ENCODE measurements at regions of chr4 and their contacts with region 1.

Region 1: DNA sequence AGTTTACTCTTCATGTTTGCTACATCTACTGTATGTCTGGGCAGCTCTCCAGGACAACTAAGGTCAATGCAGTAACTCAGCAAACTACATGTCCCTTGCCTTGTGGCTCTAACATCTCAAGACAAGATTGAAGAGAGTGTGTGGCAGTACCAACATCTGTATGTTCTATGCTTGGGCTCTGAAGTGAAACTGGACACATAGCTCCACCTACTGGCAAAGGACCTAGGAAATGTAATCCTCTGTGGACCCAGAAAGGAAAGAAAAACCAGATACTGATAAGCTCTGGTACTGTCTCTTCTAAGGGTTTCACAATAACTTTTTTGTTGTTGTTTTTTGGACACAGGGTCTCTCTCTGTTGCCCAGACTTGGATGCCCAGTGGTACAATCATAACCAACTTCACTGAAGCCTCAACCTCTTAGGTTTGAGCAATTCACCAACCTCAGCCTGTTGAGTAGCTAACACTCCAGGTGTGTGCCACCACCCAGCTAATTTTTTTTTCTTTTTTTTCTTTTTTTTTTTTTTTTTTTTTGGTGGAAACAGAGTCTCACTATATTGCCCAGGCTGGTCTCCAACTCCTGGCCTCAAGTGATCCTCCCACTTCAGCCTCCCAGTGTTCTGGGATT is 64.1 kb downstream of the QDPR start:
- DNase-seq: peak in 8 of 9 donors; percentile 25 to 63 (median 52)
- ATAC-seq: peak; percentile 83
- H3K4me3 ChIP-seq: no peak overlapping the region
- H3K4me3 Mint-ChIP-seq: no peak overlapping the region
- H3K27ac ChIP-seq: no peak overlapping the region
- H3K27ac Mint-ChIP-seq: no peak overlapping the region
- H3K4me1 ChIP-seq: no peaks in the 10 kb centered on the region
- H3K4me1 Mint-ChIP-seq: peaks cover 0 to 5% (median 0%) of the 10 kb centered on the region in 7 donors
- H3K27me3 ChIP-seq: no peaks in the 10 kb centered on the region
- H3K27me3 Mint-ChIP-seq: peaks cover 3 to 6% (median 4%) of the 10 kb centered on the region in 5 donors

Region 2: GRCh38 chr4:16289897-16290554 is 1157.8 kb before region 1 on chr4:
- CTCF ChIA-PET with region 1: interaction called, 13 read pairs
- POLR2A ChIA-PET with region 1: no interaction called
- intact Hi-C with region 1: loop called (anchors 1 kb)
- DNase-seq: peak in 5 of 9 donors; percentile 8 to 21 (median 19)
- ATAC-seq: peak; percentile 45
- H3K4me3 ChIP-seq: no peak overlapping the region
- H3K4me3 Mint-ChIP-seq: peak overlapping the region in 7 of 10 donors; percentile 7 to 69 (median 12)
- H3K27ac ChIP-seq: no peak overlapping the region
- H3K27ac Mint-ChIP-seq: no peak overlapping the region
- H3K4me1 ChIP-seq: no peaks in the 10 kb centered on the region
- H3K4me1 Mint-ChIP-seq: peaks cover 0 to 5% (median 4%) of the 10 kb centered on the region in 7 donors
- H3K27me3 ChIP-seq: no peaks in the 10 kb centered on the region
- H3K27me3 Mint-ChIP-seq: peaks cover 5 to 37% (median 17%) of the 10 kb centered on the region in 5 donors

Region 3: DNA sequence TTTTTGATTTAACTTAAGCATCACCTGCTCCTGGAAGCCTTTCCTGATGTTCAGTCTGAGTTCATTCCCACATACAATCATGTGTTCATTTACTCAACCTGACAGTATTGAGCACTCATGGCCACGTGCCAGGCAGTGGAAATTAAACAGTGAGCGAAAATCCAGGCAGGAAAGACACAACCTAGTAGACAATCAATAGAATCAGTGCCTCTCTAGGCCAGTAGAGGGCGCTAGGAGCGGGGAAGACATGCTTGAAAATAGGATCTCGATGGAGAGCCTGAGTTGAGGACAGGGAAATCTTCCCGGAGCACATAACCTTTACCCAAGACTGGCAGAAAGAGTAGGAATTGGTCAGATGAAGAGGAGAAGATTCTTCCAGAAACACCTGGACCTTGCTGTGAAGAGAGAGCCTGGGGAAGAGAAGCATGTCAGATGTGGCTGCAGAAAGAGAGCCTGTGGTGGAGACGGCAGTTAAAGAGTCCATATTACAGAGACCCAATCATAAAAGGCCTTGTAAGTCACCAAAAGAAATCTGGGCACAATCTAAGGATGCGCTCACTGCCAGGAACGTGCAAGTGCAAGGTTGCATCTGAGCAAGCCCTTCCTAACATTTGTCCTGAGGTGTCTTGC is 652.9 kb before region 1 on chr4:
- CTCF ChIA-PET with region 1: no interaction called
- POLR2A ChIA-PET with region 1: no interaction called
- intact Hi-C with region 1: loop called in 1 of 2 experiments (anchors 1 kb)
- DNase-seq: peak in 5 of 9 donors; percentile 3 to 32 (median 16)
- ATAC-seq: no peak
- H3K4me3 ChIP-seq: no peak overlapping the region
- H3K4me3 Mint-ChIP-seq: no peak overlapping the region
- H3K27ac ChIP-seq: no peak overlapping the region
- H3K27ac Mint-ChIP-seq: no peak overlapping the region
- H3K4me1 ChIP-seq: no peaks in the 10 kb centered on the region
- H3K4me1 Mint-ChIP-seq: peaks cover 0 to 4% (median 0%) of the 10 kb centered on the region in 7 donors
- H3K27me3 ChIP-seq: no peaks in the 10 kb centered on the region
- H3K27me3 Mint-ChIP-seq: peaks cover 0 to 9% (median 5%) of the 10 kb centered on the region in 5 donors

Region 4: GRCh38 chr4:17173300-17173699 is 274.5 kb before region 1 on chr4:
- CTCF ChIA-PET with region 1: no interaction called
- POLR2A ChIA-PET with region 1: no interaction called
- intact Hi-C with region 1: loop called in 1 of 2 experiments (anchors 1 kb)
- DNase-seq: no peak
- ATAC-seq: no peak
- H3K4me3 ChIP-seq: no peak overlapping the region
- H3K4me3 Mint-ChIP-seq: no peak overlapping the region
- H3K27ac ChIP-seq: no peak overlapping the region
- H3K27ac Mint-ChIP-seq: no peak overlapping the region
- H3K4me1 ChIP-seq: no peaks in the 10 kb centered on the region
- H3K4me1 Mint-ChIP-seq: peaks cover 0 to 2% (median 0%) of the 10 kb centered on the region in 7 donors
- H3K27me3 ChIP-seq: no peaks in the 10 kb centered on the region
- H3K27me3 Mint-ChIP-seq: peaks cover 0 to 14% (median 12%) of the 10 kb centered on the region in 5 donors

Region 5: DNA sequence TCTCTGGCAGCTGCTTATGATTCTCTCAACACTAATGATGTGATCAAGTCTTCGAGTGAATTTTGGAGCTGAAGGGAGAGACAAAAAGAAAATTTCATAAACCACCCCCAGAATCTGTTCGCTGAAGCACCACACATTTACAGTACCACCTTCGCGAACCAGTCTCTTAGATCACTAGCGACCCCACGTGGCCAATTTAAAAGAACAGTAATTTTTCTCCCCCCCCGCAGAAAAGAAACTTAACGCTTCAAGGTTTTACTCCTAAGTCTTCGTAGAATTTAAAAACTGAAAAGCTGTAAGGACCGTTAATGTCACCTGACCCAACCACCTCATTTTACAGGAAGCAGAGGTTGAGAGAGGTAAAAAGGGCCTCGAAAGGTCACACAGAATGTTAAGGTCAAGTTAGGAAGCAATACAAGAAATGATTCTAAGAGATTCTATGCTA is 123.4 kb before region 1 on chr4:
- CTCF ChIA-PET with region 1: interaction called, 3 read pairs
- POLR2A ChIA-PET with region 1: no interaction called
- intact Hi-C with region 1: loop called in 1 of 2 experiments (anchors 1 kb)
- DNase-seq: peak in 7 of 9 donors; percentile 16 to 43 (median 31)
- ATAC-seq: peak; percentile 56
- H3K4me3 ChIP-seq: no peak overlapping the region
- H3K4me3 Mint-ChIP-seq: peak overlapping the region; percentile 22 to 77 (median 57)
- H3K27ac ChIP-seq: no peak overlapping the region
- H3K27ac Mint-ChIP-seq: peak overlapping the region in 5 of 9 donors; percentile 17 to 67 (median 42)
- H3K4me1 ChIP-seq: peaks cover 0 to 6% of the 10 kb centered on the region in 2 donors
- H3K4me1 Mint-ChIP-seq: peaks cover 8 to 14% (median 10%) of the 10 kb centered on the region in 7 donors
- H3K27me3 ChIP-seq: no peaks in the 10 kb centered on the region
- H3K27me3 Mint-ChIP-seq: peaks cover 0 to 4% (median 0%) of the 10 kb centered on the region in 5 donors

Region 6: DNA sequence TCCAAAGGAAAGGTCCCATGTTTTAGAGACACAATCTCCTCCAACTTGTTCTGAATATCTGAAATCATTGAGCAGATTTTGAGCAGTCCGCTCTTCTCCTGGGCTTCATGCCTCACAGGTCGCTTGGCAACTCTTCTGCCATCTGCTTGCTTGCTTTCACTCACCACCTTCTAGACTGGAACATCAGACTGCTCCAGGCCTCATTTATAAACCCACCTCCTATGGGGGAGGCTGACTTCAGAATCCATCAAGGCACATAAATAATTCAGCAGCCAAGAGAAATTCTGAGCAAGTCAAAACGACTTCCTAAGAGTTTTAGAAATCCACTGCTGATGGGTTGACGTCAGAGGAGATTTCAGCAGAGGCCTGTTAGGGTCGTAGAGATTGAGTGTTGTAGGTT is 269.5 kb after region 1 on chr4:
- CTCF ChIA-PET with region 1: no interaction called
- POLR2A ChIA-PET with region 1: no interaction called
- intact Hi-C with region 1: no loop called
- DNase-seq: no peak
- ATAC-seq: no peak
- H3K4me3 ChIP-seq: no peak overlapping the region
- H3K4me3 Mint-ChIP-seq: no peak overlapping the region
- H3K27ac ChIP-seq: no peak overlapping the region
- H3K27ac Mint-ChIP-seq: no peak overlapping the region
- H3K4me1 ChIP-seq: no peaks in the 10 kb centered on the region
- H3K4me1 Mint-ChIP-seq: no peaks in the 10 kb centered on the region
- H3K27me3 ChIP-seq: no peaks in the 10 kb centered on the region
- H3K27me3 Mint-ChIP-seq: peaks cover 0 to 9% (median 0%) of the 10 kb centered on the region in 5 donors

Region 7: DNA sequence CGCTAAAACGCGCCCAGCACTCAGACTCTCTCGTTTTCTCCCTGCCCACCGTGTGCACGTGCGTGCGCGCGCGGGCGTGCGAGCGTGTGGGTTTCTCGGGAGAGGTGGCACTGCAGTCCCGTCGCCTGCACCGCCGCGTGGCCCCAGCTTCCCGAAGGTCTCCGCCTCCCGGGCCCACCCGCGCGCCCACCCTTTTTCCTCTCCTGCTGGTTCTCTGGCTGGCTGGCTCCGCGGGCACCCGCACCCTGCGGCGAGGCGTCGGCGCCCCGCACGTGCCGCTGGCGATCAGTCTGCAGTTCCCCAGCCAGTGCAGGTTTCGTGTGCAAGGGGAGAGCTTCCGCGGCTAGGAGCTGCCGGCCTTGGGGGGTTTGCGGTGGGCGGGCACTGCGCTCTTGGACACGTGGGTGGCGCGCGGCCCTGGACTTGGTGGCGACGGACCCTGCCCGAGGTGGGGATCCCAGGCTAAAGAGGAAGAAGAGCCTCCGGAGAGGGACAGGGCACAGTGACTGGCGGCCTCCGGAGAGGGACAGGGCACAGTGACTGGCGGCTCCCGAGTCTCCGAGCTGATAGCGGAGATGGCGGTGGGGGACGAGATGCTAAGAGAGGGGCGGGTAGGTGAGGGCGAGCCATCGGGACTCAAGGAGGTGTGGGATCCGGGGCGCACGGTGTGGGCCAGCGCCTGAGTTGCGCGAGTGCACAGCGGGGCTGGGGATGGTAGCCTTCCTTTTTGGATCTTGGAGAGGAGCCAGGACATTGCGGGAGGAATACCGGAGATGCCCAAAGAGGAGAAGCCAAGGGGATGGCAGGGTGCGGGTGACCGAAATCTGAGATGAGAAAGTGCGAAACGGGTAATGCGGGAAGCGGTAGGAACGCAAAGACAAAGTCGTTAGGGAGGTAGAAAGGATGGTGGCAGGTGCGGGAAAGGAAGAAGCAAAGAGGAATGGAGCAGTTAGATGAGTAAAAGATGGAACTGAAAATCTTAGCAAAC is 333.8 kb after region 1 on chr4 and contains the start of gene FAM184B:
- CTCF ChIA-PET with region 1: no interaction called
- POLR2A ChIA-PET with region 1: no interaction called
- intact Hi-C with region 1: no loop called
- DNase-seq: no peak
- ATAC-seq: no peak
- H3K4me3 ChIP-seq: no peak within 1 kb of the TSS
- H3K4me3 Mint-ChIP-seq: peak within 1 kb of the TSS in 9 of 10 donors; percentile 2 to 73 (median 13)
- H3K27ac ChIP-seq: no peak within 1 kb of the TSS
- H3K27ac Mint-ChIP-seq: peak within 1 kb of the TSS in 1 of 9 donors; percentile 47
- H3K4me1 ChIP-seq: no peaks in the 10 kb centered on the region
- H3K4me1 Mint-ChIP-seq: peaks cover 6 to 25% (median 20%) of the 10 kb centered on the region in 7 donors
- H3K27me3 ChIP-seq: peaks cover 0 to 7% of the 10 kb centered on the region in 2 donors
- H3K27me3 Mint-ChIP-seq: peaks cover 36 to 51% (median 42%) of the 10 kb centered on the region in 5 donors
- total RNA-seq, gene FAM184B: 0.08 TPM in 1 of 5 experiments, not detected in the others